B cell (primary cell): ENCODE measurements at regions of chr15 and their contacts with region 1.

Region 1: GRCh38 chr15:94258246-94258645 is 26.9 kb downstream of the MCTP2 start:
- DNase-seq: peak; percentile 85
- ATAC-seq: peak; percentile 74
- H3K4me3 ChIP-seq: peak overlapping the region in 3 of 5 experiments; percentile 18 to 25 (median 20)
- H3K4me3 Mint-ChIP-seq: peak overlapping the region; percentile 59
- H3K27ac ChIP-seq: peak overlapping the region; percentile 72 to 78
- H3K27ac Mint-ChIP-seq: peak overlapping the region; percentile 79
- H3K4me1 ChIP-seq: peaks cover 79 to 82% of the 10 kb centered on the region in 2 donors
- H3K4me1 Mint-ChIP-seq: peaks cover 83% of the 10 kb centered on the region
- H3K27me3 ChIP-seq: no peaks in the 10 kb centered on the region
- H3K27me3 Mint-ChIP-seq: no peaks in the 10 kb centered on the region
- CTCF ChIP-seq: no peak

Region 2: GRCh38 chr15:94230956-94231722 is 27.1 kb before region 1 on chr15 and contains the start of gene MCTP2:
- CTCF ChIA-PET with region 1: interaction called, 21 read pairs
- POLR2A ChIA-PET with region 1: interaction called, 4 read pairs
- intact Hi-C with region 1: loop called (anchors 1 kb)
- DNase-seq: peak; percentile 91
- ATAC-seq: peak; percentile 87
- H3K4me3 ChIP-seq: peak within 1 kb of the TSS; percentile 70 to 96 (median 80)
- H3K4me3 Mint-ChIP-seq: peak within 1 kb of the TSS; percentile 95
- H3K27ac ChIP-seq: peak within 1 kb of the TSS; percentile 88 to 90
- H3K27ac Mint-ChIP-seq: peak within 1 kb of the TSS; percentile 93
- H3K4me1 ChIP-seq: peaks cover 53 to 59% of the 10 kb centered on the region in 2 donors
- H3K4me1 Mint-ChIP-seq: peaks cover 68% of the 10 kb centered on the region
- H3K27me3 ChIP-seq: no peaks in the 10 kb centered on the region
- H3K27me3 Mint-ChIP-seq: no peaks in the 10 kb centered on the region
- CTCF ChIP-seq: peak; percentile 24
- total RNA-seq, gene MCTP2: 64.8 and 68.5 TPM in 2 replicates

Region 3: DNA sequence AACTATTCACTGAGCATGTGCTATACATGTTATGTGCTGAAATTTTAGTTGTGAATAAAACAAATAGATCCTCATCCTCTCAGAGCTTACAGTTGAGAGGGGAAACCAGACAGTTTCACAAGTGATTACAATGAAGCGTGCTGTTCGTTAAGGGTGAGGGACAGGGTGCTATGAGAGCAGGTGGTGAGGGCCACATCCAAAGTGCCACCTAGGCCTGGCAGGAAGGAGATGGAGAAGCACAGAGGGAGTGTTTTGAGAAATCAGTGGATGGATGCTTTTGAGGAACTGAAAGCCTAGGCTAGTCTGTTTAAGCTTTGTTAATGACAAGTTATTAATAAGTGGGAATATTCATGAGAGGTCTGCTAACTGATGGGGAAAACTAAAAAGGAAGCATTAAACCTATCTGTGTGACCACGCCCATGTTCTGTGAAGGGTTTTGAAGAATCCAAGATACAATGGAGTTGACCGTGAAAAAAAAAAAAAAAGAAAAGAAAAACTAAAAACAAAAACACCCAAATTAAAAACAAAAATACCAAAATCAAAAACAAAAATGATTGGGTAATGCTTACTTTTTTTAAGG is 19.6 kb before region 1 on chr15:
- CTCF ChIA-PET with region 1: interaction called, 21 read pairs
- POLR2A ChIA-PET with region 1: interaction called, 3 read pairs
- intact Hi-C with region 1: loop called (anchors 2 kb)
- DNase-seq: peak; percentile 77
- ATAC-seq: peak; percentile 74
- H3K4me3 ChIP-seq: no peak overlapping the region
- H3K4me3 Mint-ChIP-seq: peak overlapping the region; percentile 64
- H3K27ac ChIP-seq: peak overlapping the region; percentile 25 to 48
- H3K27ac Mint-ChIP-seq: peak overlapping the region; percentile 88
- H3K4me1 ChIP-seq: peaks cover 54 to 61% of the 10 kb centered on the region in 2 donors
- H3K4me1 Mint-ChIP-seq: peaks cover 79% of the 10 kb centered on the region
- H3K27me3 ChIP-seq: no peaks in the 10 kb centered on the region
- H3K27me3 Mint-ChIP-seq: no peaks in the 10 kb centered on the region
- CTCF ChIP-seq: no peak

Region 4: GRCh38 chr15:94272251-94272898 is 14.1 kb after region 1 on chr15:
- CTCF ChIA-PET with region 1: interaction called, 3 read pairs
- POLR2A ChIA-PET with region 1: interaction called, 3 read pairs
- intact Hi-C with region 1: loop called (anchors 2 kb)
- DNase-seq: peak; percentile 73
- ATAC-seq: peak; percentile 72
- H3K4me3 ChIP-seq: peak overlapping the region in 1 of 5 experiments; percentile 5
- H3K4me3 Mint-ChIP-seq: no peak overlapping the region
- H3K27ac ChIP-seq: peak overlapping the region; percentile 27 to 71
- H3K27ac Mint-ChIP-seq: no peak overlapping the region
- H3K4me1 ChIP-seq: peaks cover 31 to 43% of the 10 kb centered on the region in 2 donors
- H3K4me1 Mint-ChIP-seq: peaks cover 18% of the 10 kb centered on the region
- H3K27me3 ChIP-seq: no peaks in the 10 kb centered on the region
- H3K27me3 Mint-ChIP-seq: no peaks in the 10 kb centered on the region
- CTCF ChIP-seq: no peak

Region 5: DNA sequence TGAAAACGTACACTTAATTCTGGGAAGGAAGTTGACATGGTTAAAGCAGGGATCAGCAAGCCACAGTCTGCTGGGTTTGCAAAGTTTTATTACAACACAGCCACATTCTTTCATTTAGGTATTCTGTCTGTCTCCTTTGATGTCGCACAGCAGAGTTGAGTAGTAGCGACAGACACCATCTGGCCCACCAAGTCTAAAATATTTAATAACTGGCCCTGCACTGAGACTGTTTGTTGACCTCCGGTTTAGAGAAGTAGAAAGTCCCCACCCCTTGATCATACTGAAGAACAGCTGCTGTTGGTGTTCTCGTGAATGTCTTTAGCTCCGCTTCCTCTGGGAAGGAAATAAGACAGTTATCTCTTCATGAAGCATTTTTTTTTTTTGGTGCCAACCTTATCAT is 39.3 kb after region 1 on chr15:
- CTCF ChIA-PET with region 1: interaction called, 4 read pairs
- POLR2A ChIA-PET with region 1: interaction called, 5 read pairs
- intact Hi-C with region 1: loop called (anchors 1 kb)
- DNase-seq: peak; percentile 67
- ATAC-seq: peak; percentile 85
- H3K4me3 ChIP-seq: peak overlapping the region in 2 of 5 experiments; percentile 21 to 26
- H3K4me3 Mint-ChIP-seq: peak overlapping the region; percentile 62
- H3K27ac ChIP-seq: peak overlapping the region; percentile 71
- H3K27ac Mint-ChIP-seq: peak overlapping the region; percentile 75
- H3K4me1 ChIP-seq: peaks cover 43 to 45% of the 10 kb centered on the region in 2 donors
- H3K4me1 Mint-ChIP-seq: peaks cover 71% of the 10 kb centered on the region
- H3K27me3 ChIP-seq: no peaks in the 10 kb centered on the region
- H3K27me3 Mint-ChIP-seq: no peaks in the 10 kb centered on the region
- CTCF ChIP-seq: no peak

Region 6: GRCh38 chr15:94306700-94307650 is 48.7 kb after region 1 on chr15:
- CTCF ChIA-PET with region 1: interaction called, 6 read pairs
- POLR2A ChIA-PET with region 1: no interaction called
- intact Hi-C with region 1: loop called (anchors 2 kb)
- DNase-seq: peak; percentile 86
- ATAC-seq: peak; percentile 87
- H3K4me3 ChIP-seq: peak overlapping the region in 1 of 5 experiments; percentile 12
- H3K4me3 Mint-ChIP-seq: peak overlapping the region; percentile 64
- H3K27ac ChIP-seq: peak overlapping the region; percentile 58 to 64
- H3K27ac Mint-ChIP-seq: peak overlapping the region; percentile 91
- H3K4me1 ChIP-seq: peaks cover 27 to 41% of the 10 kb centered on the region in 2 donors
- H3K4me1 Mint-ChIP-seq: peaks cover 50% of the 10 kb centered on the region
- H3K27me3 ChIP-seq: no peaks in the 10 kb centered on the region
- H3K27me3 Mint-ChIP-seq: no peaks in the 10 kb centered on the region
- CTCF ChIP-seq: no peak